ENCODE measurements at regions of chr11 and their contacts with region 1.

Region 1: DNA sequence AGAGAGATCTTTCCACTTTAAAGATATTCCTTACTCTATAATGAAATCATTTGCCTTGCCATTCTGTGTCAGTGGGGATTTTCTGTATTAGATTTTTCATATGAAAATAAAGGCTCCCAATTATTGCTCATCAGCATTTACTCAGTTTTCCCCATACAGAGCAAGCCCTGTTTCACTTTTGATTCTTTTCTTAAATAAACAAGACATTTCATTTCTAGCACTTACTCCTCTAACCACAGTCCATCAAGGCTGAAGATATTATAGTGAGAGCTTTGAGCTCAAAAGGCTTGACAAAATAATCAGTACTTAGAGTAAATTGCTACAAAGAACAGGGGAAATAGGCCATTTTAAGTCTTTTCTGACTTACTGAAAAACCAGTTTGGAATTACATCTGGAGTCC is 385.1 kb downstream of the LRRC4C start:
- DNase-seq: no peak
- ATAC-seq: no peak
- H3K4me3 ChIP-seq: no peak overlapping the region
- H3K27ac ChIP-seq: no peak overlapping the region
- H3K4me1 ChIP-seq: no peaks in the 10 kb centered on the region
- H3K27me3 ChIP-seq: no peaks in the 10 kb centered on the region
- CTCF ChIP-seq: no peak

Region 2: GRCh38 chr11:40894501-40894900 is 179.8 kb before region 1 on chr11:
- intact Hi-C with region 1: no loop called
- DNase-seq: no peak
- ATAC-seq: no peak
- H3K4me3 ChIP-seq: no peak overlapping the region
- H3K27ac ChIP-seq: no peak overlapping the region
- H3K4me1 ChIP-seq: no peaks in the 10 kb centered on the region
- H3K27me3 ChIP-seq: no peaks in the 10 kb centered on the region
- CTCF ChIP-seq: no peak

Region 3: DNA sequence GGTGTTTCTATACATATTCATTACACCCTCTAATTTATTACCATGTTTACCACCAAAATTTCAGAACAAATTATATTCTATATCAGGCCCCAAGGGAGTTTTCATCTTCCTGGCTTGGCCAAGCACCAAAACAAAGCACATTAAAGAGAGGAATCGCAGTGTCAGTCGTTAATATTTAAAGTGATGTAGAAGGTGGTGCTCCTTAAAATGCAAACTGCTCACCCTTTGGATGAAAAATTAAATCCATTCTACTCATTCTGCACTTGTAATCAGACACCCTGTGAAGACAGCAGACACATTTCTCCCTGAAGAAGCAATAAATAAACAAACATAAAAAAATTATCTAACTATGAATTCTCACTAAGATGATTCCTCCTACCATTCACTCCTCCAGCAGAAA is 271.7 kb after region 1 on chr11:
- intact Hi-C with region 1: no loop called
- DNase-seq: no peak
- ATAC-seq: no peak
- H3K4me3 ChIP-seq: no peak overlapping the region
- H3K27ac ChIP-seq: no peak overlapping the region
- H3K4me1 ChIP-seq: no peaks in the 10 kb centered on the region
- H3K27me3 ChIP-seq: no peaks in the 10 kb centered on the region
- CTCF ChIP-seq: no peak

Region 4: DNA sequence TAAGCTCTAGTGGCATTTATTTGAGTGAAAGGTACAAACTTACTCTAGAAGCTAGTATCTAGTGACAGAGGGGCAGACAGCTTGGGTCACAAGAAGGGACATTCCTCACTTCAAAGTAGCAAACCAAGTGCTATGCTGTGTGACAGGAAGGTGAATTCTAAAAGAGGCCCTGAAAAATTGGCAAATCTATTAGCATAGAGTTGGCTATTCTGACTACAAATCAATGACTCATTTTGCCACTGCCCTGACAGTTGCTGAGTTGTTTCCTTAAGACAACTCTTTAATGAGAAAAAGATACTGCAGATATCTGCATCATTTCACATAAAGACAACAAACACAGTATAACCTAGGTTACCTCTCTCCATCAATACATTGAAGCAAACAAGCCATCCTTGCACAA is 909.1 kb after region 1 on chr11:
- intact Hi-C with region 1: loop called in 1 of 10 experiments (anchors 10 kb)
- DNase-seq: no peak
- ATAC-seq: no peak
- H3K4me3 ChIP-seq: no peak overlapping the region
- H3K27ac ChIP-seq: no peak overlapping the region
- H3K4me1 ChIP-seq: no peaks in the 10 kb centered on the region
- H3K27me3 ChIP-seq: no peaks in the 10 kb centered on the region
- CTCF ChIP-seq: no peak